ENCODE measurements at regions of chr4 and their contacts with region 1.

Region 1: DNA sequence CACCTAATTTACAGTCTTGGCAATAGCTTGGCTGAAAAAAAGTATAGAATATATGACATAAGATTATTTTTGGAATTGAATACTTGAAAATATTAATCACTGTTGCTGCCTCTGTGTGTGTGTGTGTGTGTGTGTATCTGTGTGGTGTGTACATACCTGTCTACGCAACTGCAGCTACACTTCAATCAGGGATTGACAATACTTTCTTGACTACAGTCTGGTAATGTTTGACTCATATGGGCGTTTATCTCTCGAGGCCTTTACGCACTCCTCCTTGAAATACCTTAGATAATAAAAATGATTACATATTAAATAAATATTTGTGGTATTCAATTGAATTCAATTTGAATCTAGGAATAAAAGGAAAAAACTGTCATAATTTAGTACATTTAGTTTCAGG is 565.2 kb downstream of the PCDH18 start:
- DNase-seq: no peak
- ATAC-seq: no peak
- H3K4me3 ChIP-seq: no peak overlapping the region
- H3K4me3 Mint-ChIP-seq: no peak overlapping the region
- H3K27ac ChIP-seq: no peak overlapping the region
- H3K27ac Mint-ChIP-seq: no peak overlapping the region
- H3K4me1 ChIP-seq: no peaks in the 10 kb centered on the region
- H3K4me1 Mint-ChIP-seq: no peaks in the 10 kb centered on the region
- H3K27me3 ChIP-seq: no peaks in the 10 kb centered on the region
- H3K27me3 Mint-ChIP-seq: no peaks in the 10 kb centered on the region

Region 2: DNA sequence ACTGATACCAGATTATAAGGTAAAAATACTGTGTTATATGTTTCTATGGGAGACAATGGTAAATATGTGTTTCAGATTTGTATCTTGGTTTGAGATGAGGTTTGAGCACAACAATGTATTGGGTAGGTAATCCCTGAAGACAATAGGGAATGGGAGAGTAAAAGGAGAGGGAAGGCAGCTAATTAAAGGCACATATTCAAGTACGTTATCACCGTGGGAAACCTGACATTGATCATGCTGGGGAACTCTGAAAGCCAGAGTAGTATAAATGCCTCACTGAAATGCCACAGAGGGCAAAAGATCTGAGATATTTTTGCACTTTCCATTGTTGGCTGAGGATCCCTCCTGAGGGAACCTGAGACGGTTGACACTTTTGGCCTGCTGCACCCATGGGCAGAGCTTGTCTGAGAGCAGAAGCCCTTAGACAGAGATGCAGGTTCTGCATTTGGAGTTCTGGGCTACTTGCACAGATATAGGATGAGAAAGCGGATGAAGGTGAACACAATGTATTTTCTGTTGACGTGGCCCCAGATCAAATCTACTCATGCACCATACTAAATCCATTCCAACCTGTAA is 58.5 kb after region 1 on chr4:
- CTCF ChIA-PET with region 1: no interaction called
- POLR2A ChIA-PET with region 1: interaction called in 1 of 2 experiments, 11 read pairs
- DNase-seq: no peak
- ATAC-seq: no peak
- H3K4me3 ChIP-seq: no peak overlapping the region
- H3K4me3 Mint-ChIP-seq: no peak overlapping the region
- H3K27ac ChIP-seq: no peak overlapping the region
- H3K27ac Mint-ChIP-seq: no peak overlapping the region
- H3K4me1 ChIP-seq: no peaks in the 10 kb centered on the region
- H3K4me1 Mint-ChIP-seq: no peaks in the 10 kb centered on the region
- H3K27me3 ChIP-seq: no peaks in the 10 kb centered on the region
- H3K27me3 Mint-ChIP-seq: no peaks in the 10 kb centered on the region

Region 3: DNA sequence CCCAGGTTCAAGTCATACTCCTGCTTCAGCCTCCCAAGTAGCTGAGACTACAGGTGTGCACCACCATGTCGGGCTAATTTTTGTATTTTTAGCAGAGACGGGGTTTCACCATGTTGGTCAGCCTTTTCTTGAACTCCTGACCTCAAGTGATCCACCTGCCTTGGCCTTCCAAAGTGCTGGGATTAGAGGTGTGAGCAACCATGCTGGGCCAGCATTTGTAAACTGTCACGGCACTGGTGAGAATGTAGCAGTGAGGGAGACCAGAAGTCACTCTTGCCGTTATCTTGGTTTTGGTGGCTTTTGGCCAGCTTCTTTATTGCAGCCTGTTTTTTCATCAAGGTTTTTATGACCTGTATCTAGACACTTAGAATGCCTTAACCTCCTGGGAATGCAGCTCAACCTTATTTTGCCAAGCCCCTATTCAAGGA is 542.8 kb after region 1 on chr4:
- CTCF ChIA-PET with region 1: no interaction called
- POLR2A ChIA-PET with region 1: no interaction called
- DNase-seq: no peak
- ATAC-seq: no peak
- H3K4me3 ChIP-seq: no peak overlapping the region
- H3K4me3 Mint-ChIP-seq: no peak overlapping the region
- H3K27ac ChIP-seq: no peak overlapping the region
- H3K27ac Mint-ChIP-seq: no peak overlapping the region
- H3K4me1 ChIP-seq: no peaks in the 10 kb centered on the region
- H3K4me1 Mint-ChIP-seq: no peaks in the 10 kb centered on the region
- H3K27me3 ChIP-seq: no peaks in the 10 kb centered on the region
- H3K27me3 Mint-ChIP-seq: no peaks in the 10 kb centered on the region

Measured in T-cell (primary cell).